K562 (cell line): ENCODE measurements at regions of chr11 and their contacts with region 1.

Region 1: DNA sequence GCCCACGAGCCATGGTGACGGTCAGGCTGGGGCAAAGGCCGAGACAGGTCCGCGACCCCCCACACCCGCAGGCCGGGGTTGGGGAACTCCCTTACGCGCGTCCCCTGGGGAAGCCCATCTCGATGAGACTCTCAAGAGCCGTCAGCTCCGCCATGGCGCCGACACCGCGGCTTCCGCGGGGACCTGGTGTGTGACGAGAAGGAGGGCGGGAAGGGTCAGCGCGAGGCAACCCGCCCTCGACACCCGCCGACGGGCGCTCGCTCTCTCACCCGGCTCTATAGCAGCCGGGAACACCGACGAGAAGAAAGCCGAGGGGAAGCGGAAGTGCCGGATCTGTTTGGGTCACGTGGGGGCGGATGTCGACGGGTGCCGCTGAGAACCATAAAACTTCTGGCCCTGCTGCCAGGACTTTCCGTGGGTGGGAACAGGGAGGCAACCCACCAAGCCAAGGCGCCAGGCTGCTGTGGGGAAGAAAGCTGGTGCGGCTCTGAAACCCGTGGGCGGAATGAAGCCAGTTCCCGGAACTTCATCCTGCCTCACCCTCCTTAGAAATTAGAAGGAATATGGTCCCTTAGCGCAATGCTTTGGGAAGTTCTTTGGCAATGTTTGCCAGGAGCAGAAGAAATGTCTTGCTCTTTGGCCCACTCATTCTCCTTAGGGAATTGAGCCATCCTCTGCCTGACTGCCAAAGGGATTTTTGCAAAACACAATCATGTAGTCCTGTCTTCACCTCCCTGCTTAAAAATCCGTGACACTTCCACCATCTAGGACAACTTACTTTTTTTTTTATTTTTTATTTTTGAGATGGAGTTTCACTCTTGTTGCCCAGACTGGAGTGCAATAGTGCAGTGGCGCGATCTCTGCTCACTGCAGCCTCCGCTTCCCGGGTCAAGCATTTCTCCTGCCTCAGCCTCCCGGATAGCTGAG is at the start of gene UBXN1:
- DNase-seq: peak; percentile 86 to 94 (median 88)
- ATAC-seq: peak; percentile 85
- H3K4me3 ChIP-seq: peak within 1 kb of the TSS; percentile 81
- H3K27ac ChIP-seq: peak within 1 kb of the TSS; percentile 80
- H3K4me1 ChIP-seq: peaks cover 25 to 43% of the 10 kb centered on the region in 2 experiments; a peak in 4 of 5 replicates
- H3K27me3 ChIP-seq: no peaks in the 10 kb centered on the region
- CTCF ChIP-seq: no peak
- EP300 ChIP-seq: no peak; the same call in 1 of the 2 replicates
- POLR2A ChIP-seq: peak; percentile 88
- RAD21 ChIP-seq: 0 out of 4 replicates have a peak, but pooled peaks of 1 of the 2 experiments have one; percentile 5
- polyA plus RNA-seq, gene UBXN1: 4.8 to 10.4 TPM

Region 2: DNA sequence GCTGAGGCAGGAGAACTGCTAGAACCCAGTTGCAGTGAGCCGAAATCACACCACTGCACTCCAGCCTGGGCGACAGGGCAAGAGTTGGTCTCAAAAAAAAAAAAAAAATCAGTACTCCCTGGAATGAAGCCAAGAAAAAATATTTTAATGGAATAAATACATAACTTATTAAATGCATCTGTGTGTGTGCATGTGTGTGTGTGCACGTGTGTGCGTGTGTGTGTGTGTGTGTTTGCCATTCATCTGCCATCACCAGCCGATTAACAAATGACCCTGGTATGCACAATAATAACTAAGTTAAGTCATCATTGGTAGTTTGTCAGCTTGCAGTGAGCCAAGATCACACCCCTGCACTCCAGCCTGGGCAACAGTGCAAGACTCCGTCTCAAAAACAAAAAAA is 295.2 kb before region 1 on chr11:
- CTCF ChIA-PET with region 1: no interaction called
- POLR2A ChIA-PET with region 1: no interaction called
- in situ Hi-C with region 1: no loop called
- intact Hi-C with region 1: loop called (anchors 5 kb)
- DNase-seq: no peak
- ATAC-seq: no peak
- H3K4me3 ChIP-seq: no peak overlapping the region
- H3K27ac ChIP-seq: no peak overlapping the region
- H3K4me1 ChIP-seq: peaks cover 4 to 7% of the 10 kb centered on the region in 2 experiments; a peak in 3 of 5 replicates
- H3K27me3 ChIP-seq: no peaks in the 10 kb centered on the region
- CTCF ChIP-seq: no peak
- EP300 ChIP-seq: no peak
- POLR2A ChIP-seq: no peak
- RAD21 ChIP-seq: no peak

Region 3: DNA sequence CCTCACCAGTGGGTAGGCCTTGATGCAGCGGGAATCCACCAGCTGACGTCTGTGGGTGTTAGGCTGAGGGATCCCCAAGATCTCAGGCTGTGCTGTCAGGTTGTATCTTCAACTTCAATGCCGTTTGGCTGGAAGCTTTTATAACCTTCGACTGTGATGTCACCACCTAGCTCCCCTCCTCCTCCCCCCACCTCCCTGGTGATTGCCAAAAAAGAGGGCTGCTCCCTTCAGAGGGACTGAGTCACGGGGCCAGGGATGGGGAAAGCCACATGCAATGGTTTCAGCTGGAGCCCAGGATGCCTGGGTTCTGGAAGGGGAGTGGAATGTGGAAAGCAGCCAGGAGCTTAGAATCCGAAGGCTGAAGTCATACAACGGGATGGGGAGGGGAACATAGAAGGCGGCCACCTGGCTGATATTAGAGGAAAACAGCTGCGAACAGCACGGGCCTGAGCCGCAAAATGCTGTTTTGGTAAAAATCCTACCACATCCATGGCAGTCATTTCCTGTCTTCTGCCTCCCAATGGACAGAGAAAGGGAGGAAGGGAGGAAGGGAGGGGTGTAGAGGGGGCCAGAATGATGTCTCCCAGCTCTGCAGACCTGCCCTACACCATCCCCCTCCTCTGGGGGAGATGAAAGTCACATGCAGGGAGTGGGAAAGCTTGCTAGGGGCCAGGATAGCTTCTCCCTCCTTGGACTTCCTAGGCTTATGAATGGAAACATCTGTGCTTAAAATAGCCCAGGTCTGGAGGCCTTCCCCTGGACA is 10.6 kb after region 1 on chr11 and contains the start of gene LRRN4CL:
- CTCF ChIA-PET with region 1: no interaction called
- POLR2A ChIA-PET with region 1: interaction called, 11 read pairs
- in situ Hi-C with region 1: no loop called
- intact Hi-C with region 1: no loop called
- DNase-seq: no peak
- ATAC-seq: peak; percentile 69
- H3K4me3 ChIP-seq: no peak within 1 kb of the TSS
- H3K27ac ChIP-seq: no peak within 1 kb of the TSS
- H3K4me1 ChIP-seq: peaks cover 0 to 10% of the 10 kb centered on the region in 2 experiments; a peak in 3 of 5 replicates
- H3K27me3 ChIP-seq: no peaks in the 10 kb centered on the region
- CTCF ChIP-seq: no peak
- EP300 ChIP-seq: no peak
- POLR2A ChIP-seq: peak; percentile 52
- RAD21 ChIP-seq: no peak
- polyA plus RNA-seq, gene LRRN4CL: not detected

Region 4: GRCh38 chr11:62880803-62881578 is 202.0 kb after region 1 on chr11 and contains the start of gene SLC3A2:
- CTCF ChIA-PET with region 1: no interaction called
- POLR2A ChIA-PET with region 1: interaction called, 3 read pairs
- in situ Hi-C with region 1: no loop called
- intact Hi-C with region 1: loop called (anchors 5 kb)
- DNase-seq: peak; percentile 83 to 95 (median 86)
- ATAC-seq: peak; percentile 88
- H3K4me3 ChIP-seq: peak within 1 kb of the TSS; percentile 56
- H3K27ac ChIP-seq: peak within 1 kb of the TSS; percentile 95
- H3K4me1 ChIP-seq: peaks cover 56 to 58% of the 10 kb centered on the region in 2 experiments
- H3K27me3 ChIP-seq: no peaks in the 10 kb centered on the region
- CTCF ChIP-seq: peak; percentile 72 to 80 (median 77)
- EP300 ChIP-seq: no peak
- POLR2A ChIP-seq: peak; percentile 99
- RAD21 ChIP-seq: peak; percentile 24 to 43; a peak in 2 of 4 replicates
- polyA plus RNA-seq, gene SLC3A2: 20.0 to 39.7 TPM